AG04450 (cell line): ENCODE measurements at regions of chr2 and their contacts with region 1.

Region 1: GRCh38 chr2:62293490-62294271 is 97.8 kb downstream of the B3GNT2 start:
- DNase-seq: no peak
- H3K4me3 ChIP-seq: no peak overlapping the region
- H3K27ac ChIP-seq: no peak overlapping the region
- H3K27me3 ChIP-seq: peaks cover 17% of the 10 kb centered on the region
- CTCF ChIP-seq: no peak

Region 2: DNA sequence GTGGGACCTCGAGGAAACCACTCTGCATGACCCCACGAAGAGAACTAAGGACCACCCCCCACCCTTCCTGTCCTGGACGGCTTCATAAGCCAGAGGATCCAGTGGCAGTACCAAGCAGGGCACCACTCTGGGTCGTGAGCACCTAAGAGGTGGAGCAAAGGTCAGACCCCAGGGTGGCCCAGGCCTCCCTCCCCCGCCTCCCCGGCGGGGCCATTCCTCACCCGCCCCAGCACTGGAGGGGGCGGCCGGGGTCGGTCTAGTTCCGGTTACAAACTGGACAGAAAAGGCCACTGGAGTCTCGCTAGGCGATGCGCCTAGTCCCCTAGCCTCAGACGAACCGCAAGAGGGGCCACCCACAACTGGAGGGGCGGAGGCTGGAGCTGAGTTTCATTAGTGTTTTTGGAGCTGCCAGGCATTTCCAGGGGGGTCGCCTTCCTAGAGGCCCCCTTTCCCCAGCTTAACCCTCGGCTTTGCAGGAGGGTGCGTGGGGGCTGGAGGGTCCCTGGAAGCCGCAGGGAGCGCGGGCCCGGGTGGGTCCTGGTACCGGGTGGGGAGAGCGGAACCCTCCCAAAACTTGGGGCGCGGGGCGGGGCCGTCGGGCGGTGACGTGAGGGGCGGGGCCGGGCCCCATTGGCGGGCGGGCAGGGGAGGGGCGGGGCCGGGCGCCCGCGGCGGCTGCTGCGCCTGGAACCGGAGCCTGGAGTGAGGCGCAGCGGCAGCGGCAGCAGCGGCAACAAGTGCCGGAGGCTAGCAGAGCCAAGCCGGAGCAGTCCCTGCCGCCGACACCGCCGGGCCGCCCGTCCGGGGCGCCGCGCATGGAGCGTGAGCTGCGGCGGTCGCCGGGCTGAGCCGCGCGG is 98.0 kb before region 1 on chr2 and contains the start of gene B3GNT2:
- CTCF ChIA-PET with region 1: no interaction called
- POLR2A ChIA-PET with region 1: interaction called, 14 read pairs
- DNase-seq: no peak
- H3K4me3 ChIP-seq: peak within 1 kb of the TSS; percentile 92
- H3K27ac ChIP-seq: peak within 1 kb of the TSS; percentile 21
- H3K27me3 ChIP-seq: peaks cover 3% of the 10 kb centered on the region
- CTCF ChIP-seq: no peak
- polyA plus RNA-seq, gene B3GNT2: 7.3 and 8.6 TPM in 2 replicates

Region 3: DNA sequence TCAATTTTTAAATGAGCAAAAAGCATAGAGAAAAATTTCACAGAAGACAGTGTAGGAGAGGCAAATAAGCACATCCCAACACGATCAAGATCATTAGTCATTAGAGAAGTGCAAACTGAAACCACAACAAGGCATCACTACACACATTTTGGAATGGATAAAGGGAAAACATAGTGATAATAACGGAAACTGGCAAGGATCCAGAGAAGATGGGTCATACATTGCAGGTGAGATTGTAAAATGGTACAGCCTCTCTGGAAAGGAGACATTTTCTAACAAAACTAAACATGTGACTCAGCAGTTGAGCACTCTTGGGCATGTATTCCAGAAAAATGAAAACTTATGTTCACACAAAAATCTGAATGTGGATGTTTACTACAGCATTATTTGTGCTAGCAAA is 310.7 kb after region 1 on chr2:
- CTCF ChIA-PET with region 1: no interaction called
- POLR2A ChIA-PET with region 1: no interaction called
- DNase-seq: no peak
- H3K4me3 ChIP-seq: no peak overlapping the region
- H3K27ac ChIP-seq: no peak overlapping the region
- H3K27me3 ChIP-seq: no peaks in the 10 kb centered on the region
- CTCF ChIP-seq: no peak